ENCODE measurements at regions of chr19 and their contacts with region 1.

Region 1: DNA sequence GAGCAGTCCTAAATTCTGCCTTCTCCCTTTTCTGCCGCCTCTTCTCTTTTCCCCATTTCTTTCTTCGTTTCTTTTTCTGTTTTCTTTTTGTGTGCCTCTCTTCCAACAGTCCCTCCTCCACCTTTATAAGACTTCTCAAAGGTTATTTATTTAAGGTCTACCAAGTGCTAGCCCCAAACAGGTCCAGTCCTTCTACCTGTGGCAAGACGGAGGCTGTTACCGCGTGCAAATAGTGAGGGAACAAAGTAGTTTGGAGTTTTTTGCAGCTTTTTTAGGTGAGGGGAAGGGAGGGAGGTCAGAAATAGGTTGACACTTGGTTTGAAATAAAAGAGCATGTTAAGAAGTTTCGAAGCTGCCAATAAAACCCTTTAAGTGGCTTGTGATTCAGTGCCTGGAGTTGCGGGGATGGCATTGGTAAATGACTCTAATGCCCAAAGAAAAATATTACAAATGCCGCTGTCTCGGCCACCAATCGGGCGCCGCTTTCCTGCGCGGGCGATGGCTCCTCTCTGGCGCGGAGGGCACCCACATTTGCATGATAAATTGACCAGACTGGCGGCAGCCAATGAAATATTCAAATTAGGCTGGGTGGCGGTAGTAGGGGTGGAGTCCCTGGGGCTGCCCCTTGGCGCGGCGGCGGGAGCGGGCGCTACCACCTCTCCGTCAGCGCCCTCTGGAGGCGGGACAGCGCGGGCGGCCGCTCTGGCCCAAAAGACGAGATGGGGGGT is 7.5 kb upstream of the TSHZ3 start:
- DNase-seq: peak; percentile 76
- H3K4me3 Mint-ChIP-seq: no peak overlapping the region
- H3K27ac Mint-ChIP-seq: no peak overlapping the region
- H3K4me1 Mint-ChIP-seq: peaks cover 44% of the 10 kb centered on the region
- H3K27me3 Mint-ChIP-seq: peaks cover 79% of the 10 kb centered on the region

Region 2: GRCh38 chr19:30669329-30670010 is 687.3 kb before region 1 on chr19:
- CTCF ChIA-PET with region 1: interaction called, 3 read pairs
- intact Hi-C with region 1: loop called (anchors 5 kb)
- DNase-seq: peak; percentile 61
- H3K4me3 Mint-ChIP-seq: no peak overlapping the region
- H3K27ac Mint-ChIP-seq: no peak overlapping the region
- H3K4me1 Mint-ChIP-seq: no peaks in the 10 kb centered on the region
- H3K27me3 Mint-ChIP-seq: peaks cover 34% of the 10 kb centered on the region

Region 3: DNA sequence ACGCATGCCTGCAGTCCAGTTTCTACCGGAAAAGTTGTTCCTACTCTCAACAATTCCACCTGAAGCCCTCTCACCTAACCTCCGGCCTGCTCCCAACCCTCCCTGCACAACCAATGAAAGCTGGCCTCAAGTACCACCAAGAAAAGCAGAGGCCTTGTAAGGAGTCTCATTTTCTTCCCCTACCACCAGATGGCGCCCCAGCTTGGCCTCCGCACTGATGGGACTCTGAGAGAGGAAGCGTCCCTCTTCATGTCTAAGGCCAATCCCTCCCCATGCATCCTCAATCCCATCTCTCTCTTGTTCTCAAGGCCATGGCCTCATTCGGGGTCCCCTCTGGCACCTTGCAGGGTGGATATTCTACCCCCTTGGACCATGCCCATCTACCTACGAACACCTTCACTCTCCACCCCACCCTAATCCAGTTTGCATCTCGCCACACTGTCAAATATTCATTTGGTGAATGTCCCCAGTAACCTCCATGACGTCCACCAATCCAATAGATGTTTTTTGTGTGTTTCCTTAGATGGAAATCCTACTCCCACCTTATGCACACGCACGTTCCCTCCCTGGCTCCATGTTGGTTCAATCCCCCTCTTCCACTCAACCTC is 571.8 kb before region 1 on chr19:
- CTCF ChIA-PET with region 1: interaction called, 3 read pairs
- intact Hi-C with region 1: loop called (anchors 1 kb)
- DNase-seq: peak; percentile 72
- H3K4me3 Mint-ChIP-seq: no peak overlapping the region
- H3K27ac Mint-ChIP-seq: no peak overlapping the region
- H3K4me1 Mint-ChIP-seq: no peaks in the 10 kb centered on the region
- H3K27me3 Mint-ChIP-seq: peaks cover 16% of the 10 kb centered on the region

Region 4: DNA sequence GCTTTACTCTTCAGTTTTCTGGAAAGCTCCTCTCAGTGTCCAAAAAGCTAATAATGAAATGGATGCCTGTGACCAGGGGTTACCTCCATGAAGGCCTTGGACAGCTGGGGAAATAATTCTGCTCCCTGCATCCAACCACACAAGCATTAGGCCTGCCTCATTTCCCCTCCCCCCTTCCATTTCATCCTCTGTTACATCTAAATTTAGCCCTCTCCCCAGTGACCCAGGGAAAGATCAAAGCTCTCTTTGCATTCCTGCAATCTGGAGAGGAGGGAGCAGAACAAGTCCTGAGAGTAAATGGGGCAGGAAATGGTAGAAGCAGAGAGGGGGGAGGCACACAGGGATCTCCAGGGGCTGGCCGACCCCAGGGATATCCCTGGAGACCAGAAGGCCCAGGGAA is 460.2 kb before region 1 on chr19:
- CTCF ChIA-PET with region 1: no interaction called
- intact Hi-C with region 1: no loop called
- DNase-seq: no peak
- H3K4me3 Mint-ChIP-seq: no peak overlapping the region
- H3K27ac Mint-ChIP-seq: no peak overlapping the region
- H3K4me1 Mint-ChIP-seq: no peaks in the 10 kb centered on the region
- H3K27me3 Mint-ChIP-seq: peaks cover 2% of the 10 kb centered on the region

Region 5: GRCh38 chr19:30955112-30956104 is 401.3 kb before region 1 on chr19:
- CTCF ChIA-PET with region 1: no interaction called
- intact Hi-C with region 1: no loop called
- DNase-seq: no peak
- H3K4me3 Mint-ChIP-seq: no peak overlapping the region
- H3K27ac Mint-ChIP-seq: no peak overlapping the region
- H3K4me1 Mint-ChIP-seq: no peaks in the 10 kb centered on the region
- H3K27me3 Mint-ChIP-seq: peaks cover 37% of the 10 kb centered on the region

Region 6: DNA sequence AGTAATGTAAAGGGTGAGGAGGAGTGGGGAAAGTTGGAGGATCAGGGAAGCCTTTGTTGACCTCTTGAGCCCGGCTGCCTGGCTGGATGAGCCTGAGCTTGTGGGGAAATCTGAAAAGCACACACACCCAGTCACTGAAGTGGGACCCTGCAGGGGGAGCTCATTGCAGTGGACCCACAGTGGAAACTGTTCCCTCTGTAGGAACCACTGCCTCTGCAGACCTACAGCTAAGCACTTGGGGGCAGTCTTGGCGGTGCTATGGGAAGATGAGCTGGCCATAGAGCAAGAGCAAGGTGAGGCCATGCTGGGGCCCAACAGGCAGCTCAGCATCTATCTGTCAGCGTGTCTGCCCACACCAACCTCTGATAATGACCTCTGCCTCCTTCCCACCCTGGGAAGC is 302.3 kb before region 1 on chr19:
- CTCF ChIA-PET with region 1: interaction called, 8 read pairs
- intact Hi-C with region 1: loop called (anchors 1 kb)
- DNase-seq: peak; percentile 62
- H3K4me3 Mint-ChIP-seq: no peak overlapping the region
- H3K27ac Mint-ChIP-seq: no peak overlapping the region
- H3K4me1 Mint-ChIP-seq: no peaks in the 10 kb centered on the region
- H3K27me3 Mint-ChIP-seq: peaks cover 21% of the 10 kb centered on the region

Region 7: DNA sequence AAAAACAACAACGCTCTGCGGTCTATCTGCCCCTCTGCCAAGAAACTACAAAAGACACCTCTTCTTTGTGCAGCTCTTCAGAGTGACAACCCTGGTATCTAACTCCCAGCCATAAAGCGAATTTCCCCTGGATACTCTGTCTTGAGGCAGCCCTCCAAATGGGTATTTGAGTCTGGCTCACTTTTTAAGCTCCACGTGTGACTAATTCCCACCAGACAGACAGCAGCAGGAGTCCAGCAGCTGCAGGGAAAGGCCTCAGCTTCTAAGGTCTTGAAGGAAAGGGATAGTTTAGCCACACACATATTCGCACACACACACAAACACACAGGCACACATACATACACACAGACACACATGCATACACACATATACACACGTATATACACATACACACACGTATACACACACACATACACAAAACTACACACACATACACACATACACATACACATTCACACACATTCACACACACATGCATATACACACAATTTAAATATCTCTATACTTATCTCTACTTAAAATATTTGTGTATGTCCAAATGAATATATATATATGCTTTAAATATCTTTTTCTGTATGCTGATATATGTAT is 196.3 kb before region 1 on chr19:
- CTCF ChIA-PET with region 1: no interaction called
- intact Hi-C with region 1: loop called (anchors 2 kb)
- DNase-seq: no peak
- H3K4me3 Mint-ChIP-seq: no peak overlapping the region
- H3K27ac Mint-ChIP-seq: no peak overlapping the region
- H3K4me1 Mint-ChIP-seq: no peaks in the 10 kb centered on the region
- H3K27me3 Mint-ChIP-seq: peaks cover 27% of the 10 kb centered on the region

Region 8: DNA sequence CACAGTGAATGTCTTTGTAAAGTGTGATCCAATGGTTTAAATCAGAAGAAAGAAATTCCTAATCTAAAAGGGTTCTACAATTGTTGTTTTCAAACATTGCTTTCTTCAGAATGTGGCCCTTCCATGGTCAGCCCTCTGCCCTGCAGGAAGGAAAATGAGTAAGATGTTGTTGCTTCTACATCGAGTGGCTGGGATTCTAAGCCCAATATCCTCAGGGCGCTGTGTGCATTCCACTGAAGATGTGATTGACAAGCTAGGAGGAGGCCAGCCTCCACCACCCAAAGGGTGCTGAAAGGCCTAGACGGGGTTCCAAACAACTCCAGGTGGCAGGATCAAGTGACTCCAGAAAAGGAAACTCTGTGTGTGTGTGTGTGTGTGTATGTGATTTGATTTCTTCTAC is 309.4 kb after region 1 on chr19:
- CTCF ChIA-PET with region 1: no interaction called
- intact Hi-C with region 1: no loop called
- DNase-seq: no peak
- H3K4me3 Mint-ChIP-seq: no peak overlapping the region
- H3K27ac Mint-ChIP-seq: no peak overlapping the region
- H3K4me1 Mint-ChIP-seq: no peaks in the 10 kb centered on the region
- H3K27me3 Mint-ChIP-seq: no peaks in the 10 kb centered on the region

Region 9: DNA sequence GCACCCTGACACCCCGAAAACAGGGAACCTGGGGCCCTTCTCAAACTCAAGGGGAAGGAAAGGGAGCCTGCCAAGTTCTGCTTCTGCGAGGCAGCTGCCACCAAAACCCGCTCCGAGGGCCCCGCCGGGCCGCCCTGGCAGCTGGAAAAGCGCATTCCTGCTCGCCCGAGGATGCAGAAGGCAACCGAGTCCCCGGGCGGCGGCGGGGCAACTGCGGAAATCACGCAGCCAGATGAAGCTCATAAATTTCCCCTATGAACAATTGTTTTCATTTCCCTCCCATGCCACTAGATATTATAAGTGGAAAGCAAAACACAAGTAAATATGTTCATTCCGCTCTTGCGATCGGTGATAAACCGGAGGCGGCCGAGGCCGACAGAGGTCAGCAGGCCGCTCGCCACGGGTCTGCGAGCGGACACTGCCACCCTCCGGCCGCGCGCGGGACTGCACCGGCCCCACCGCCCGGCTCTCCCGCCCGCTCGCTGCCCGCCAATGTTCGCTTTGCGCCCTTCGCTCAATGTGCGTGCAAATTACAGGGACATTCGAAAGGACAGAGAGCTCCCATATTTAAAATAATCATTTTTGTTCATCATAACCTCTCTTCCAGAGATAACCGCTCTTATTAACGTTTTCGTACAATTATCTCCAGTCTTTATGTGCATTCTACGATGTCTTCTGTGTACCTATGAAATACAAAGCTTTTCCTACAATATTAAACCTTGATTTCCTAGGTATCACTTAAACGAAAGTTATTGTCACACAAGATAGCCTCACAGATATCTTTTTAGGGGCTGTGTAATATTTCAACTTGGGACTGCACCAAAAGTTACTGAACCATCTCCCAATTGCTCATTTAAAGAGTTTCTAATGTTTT is 867.9 kb after region 1 on chr19:
- CTCF ChIA-PET with region 1: interaction called, 3 read pairs
- intact Hi-C with region 1: loop called (anchors 5 kb)
- DNase-seq: peak; percentile 54
- H3K4me3 Mint-ChIP-seq: peak overlapping the region; percentile 62
- H3K27ac Mint-ChIP-seq: no peak overlapping the region
- H3K4me1 Mint-ChIP-seq: peaks cover 14% of the 10 kb centered on the region
- H3K27me3 Mint-ChIP-seq: peaks cover 36% of the 10 kb centered on the region

Measured in activated naive CD4-positive, alpha-beta T cell treated with anti-CD3 and anti-CD28 coated beads for 36 hours (primary cell).